ENCODE measurements at regions of chr6 and their contacts with region 1.

Region 1: GRCh38 chr6:16849988-16850680 is 88.9 kb upstream of the ATXN1 start:
- DNase-seq: no peak
- H3K4me3 ChIP-seq: no peak overlapping the region
- H3K4me3 Mint-ChIP-seq: no peak overlapping the region
- H3K27ac ChIP-seq: no peak overlapping the region
- H3K27ac Mint-ChIP-seq: peak overlapping the region in 1 of 8 donors; percentile 78
- H3K4me1 ChIP-seq: no peaks in the 10 kb centered on the region
- H3K4me1 Mint-ChIP-seq: peaks cover 7 to 13% (median 9%) of the 10 kb centered on the region in 3 donors
- H3K27me3 ChIP-seq: no peaks in the 10 kb centered on the region
- H3K27me3 Mint-ChIP-seq: peaks cover 4 to 24% of the 10 kb centered on the region in 2 donors

Region 2: GRCh38 chr6:16265351-16266341 is 584.5 kb before region 1 on chr6:
- CTCF ChIA-PET with region 1: no interaction called
- POLR2A ChIA-PET with region 1: interaction called, 10 read pairs
- DNase-seq: no peak
- H3K4me3 ChIP-seq: no peak overlapping the region
- H3K4me3 Mint-ChIP-seq: no peak overlapping the region
- H3K27ac ChIP-seq: peak overlapping the region; percentile 76
- H3K27ac Mint-ChIP-seq: no peak overlapping the region
- H3K4me1 ChIP-seq: no peaks in the 10 kb centered on the region
- H3K4me1 Mint-ChIP-seq: no peaks in the 10 kb centered on the region
- H3K27me3 ChIP-seq: no peaks in the 10 kb centered on the region
- H3K27me3 Mint-ChIP-seq: peaks cover 5 to 7% of the 10 kb centered on the region in 2 donors

Region 3: DNA sequence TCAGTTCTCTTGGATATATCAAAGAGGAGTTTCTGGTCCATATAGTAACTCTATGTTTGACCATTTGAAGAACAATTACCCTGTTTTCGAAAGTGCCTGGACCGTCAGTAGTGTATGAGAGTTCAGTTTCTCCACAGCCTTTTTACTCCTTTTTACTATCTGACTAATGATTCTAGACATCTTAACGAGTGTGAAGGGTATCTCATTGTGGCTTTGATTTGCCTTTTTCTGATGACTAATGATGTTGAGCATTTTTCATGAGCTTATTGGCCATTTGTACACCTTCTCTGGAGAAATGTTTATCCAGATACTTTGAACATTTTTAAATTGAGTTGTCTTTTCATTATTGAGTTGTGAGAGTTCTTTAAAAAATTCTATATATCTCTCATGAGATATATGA is 26.1 kb after region 1 on chr6:
- CTCF ChIA-PET with region 1: no interaction called
- POLR2A ChIA-PET with region 1: no interaction called
- DNase-seq: no peak
- H3K4me3 ChIP-seq: no peak overlapping the region
- H3K4me3 Mint-ChIP-seq: no peak overlapping the region
- H3K27ac ChIP-seq: no peak overlapping the region
- H3K27ac Mint-ChIP-seq: no peak overlapping the region
- H3K4me1 ChIP-seq: no peaks in the 10 kb centered on the region
- H3K4me1 Mint-ChIP-seq: no peaks in the 10 kb centered on the region
- H3K27me3 ChIP-seq: no peaks in the 10 kb centered on the region
- H3K27me3 Mint-ChIP-seq: peaks cover 21 to 44% of the 10 kb centered on the region in 2 donors